ENCODE measurements at regions of chr6 and their contacts with region 1.

Region 1: DNA sequence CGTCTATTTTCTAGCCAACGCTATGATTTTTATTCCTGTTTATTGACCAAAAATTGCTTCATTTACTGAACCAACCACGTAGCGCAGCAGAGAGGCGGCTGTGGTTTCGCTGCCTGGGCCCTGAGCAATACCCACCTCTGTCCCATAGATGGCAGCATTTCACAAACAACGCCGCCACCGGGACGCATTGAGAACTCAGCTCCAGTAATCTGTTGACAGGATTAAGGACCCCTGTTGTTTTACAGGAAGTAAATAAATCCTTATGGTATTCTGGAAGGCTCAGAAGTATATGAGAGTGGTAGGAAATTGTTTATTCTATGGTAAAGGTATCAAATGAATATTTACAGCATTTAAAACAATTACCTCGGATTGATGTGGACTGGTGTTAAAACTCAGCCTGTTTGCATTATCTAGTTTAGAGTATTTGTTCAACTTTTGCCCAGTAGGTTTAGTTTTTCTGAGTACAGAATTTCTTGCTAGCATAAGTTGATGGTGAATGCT is 547.9 kb upstream of the SLC35B3 start:
- DNase-seq: peak; percentile 24 to 64 (median 34)
- ATAC-seq: peak in 3 of 4 donors; percentile 63 to 83 (median 66)
- H3K4me3 ChIP-seq: no peak overlapping the region
- H3K27ac ChIP-seq: no peak overlapping the region
- H3K4me1 ChIP-seq: peaks cover 0 to 5% (median 0%) of the 10 kb centered on the region in 12 donors
- H3K27me3 ChIP-seq: peaks cover 0 to 22% (median 0%) of the 10 kb centered on the region in 9 donors
- CTCF ChIP-seq: peak; percentile 80 to 96 (median 89)
- POLR2A ChIP-seq: no peak

Region 2: GRCh38 chr6:10434692-10435376 is 1451.6 kb after region 1 on chr6:
- intact Hi-C with region 1: loop called in 9 of 10 experiments (anchors 2 to 10 kb)
- DNase-seq: no peak
- ATAC-seq: no peak
- H3K4me3 ChIP-seq: no peak overlapping the region
- H3K27ac ChIP-seq: no peak overlapping the region
- H3K4me1 ChIP-seq: no peaks in the 10 kb centered on the region
- H3K27me3 ChIP-seq: peaks cover 0 to 35% (median 3%) of the 10 kb centered on the region in 9 donors
- CTCF ChIP-seq: peak; percentile 39 to 75 (median 58)
- POLR2A ChIP-seq: no peak

Measured in heart left ventricle (tissue), 16 donors.